Naive thymus-derived CD8-positive, alpha-beta T cell (primary cell): ENCODE measurements at regions of chr2 and their contacts with region 1.

Region 1: DNA sequence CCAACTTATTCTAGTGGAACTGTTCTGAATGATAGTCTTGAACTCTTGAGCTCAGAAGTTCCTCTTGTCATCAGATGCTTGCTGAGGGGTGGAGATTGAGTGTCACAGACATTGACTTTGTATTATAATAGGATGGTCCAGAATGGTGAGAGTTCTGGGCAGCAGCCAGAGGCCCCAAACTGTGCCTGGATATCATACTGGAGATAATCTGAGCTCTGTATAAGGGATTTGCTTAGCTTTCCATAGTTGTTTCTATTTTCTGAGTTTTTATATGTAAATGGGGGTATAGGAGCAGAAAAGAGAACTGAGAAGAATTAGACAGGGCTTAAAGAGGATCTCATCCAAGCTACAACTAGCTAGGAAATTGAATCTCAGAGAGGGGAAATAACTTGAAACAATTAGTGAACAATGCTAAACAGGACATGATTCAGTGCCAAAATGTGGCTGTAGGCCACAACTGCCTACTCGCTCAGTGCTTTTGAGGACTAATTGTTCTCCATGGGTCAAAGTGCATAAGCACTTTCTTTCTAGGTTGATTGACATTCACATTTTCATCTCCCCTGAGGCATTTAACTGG is 10.1 kb upstream of the LCLAT1 start:
- DNase-seq: no peak
- ATAC-seq: no peak
- H3K4me3 Mint-ChIP-seq: no peak overlapping the region
- H3K27ac Mint-ChIP-seq: peak overlapping the region in 4 of 10 donors; percentile 10 to 55 (median 46)
- H3K4me1 Mint-ChIP-seq: peaks cover 20 to 41% (median 30%) of the 10 kb centered on the region in 4 donors
- H3K27me3 Mint-ChIP-seq: no peaks in the 10 kb centered on the region

Region 2: DNA sequence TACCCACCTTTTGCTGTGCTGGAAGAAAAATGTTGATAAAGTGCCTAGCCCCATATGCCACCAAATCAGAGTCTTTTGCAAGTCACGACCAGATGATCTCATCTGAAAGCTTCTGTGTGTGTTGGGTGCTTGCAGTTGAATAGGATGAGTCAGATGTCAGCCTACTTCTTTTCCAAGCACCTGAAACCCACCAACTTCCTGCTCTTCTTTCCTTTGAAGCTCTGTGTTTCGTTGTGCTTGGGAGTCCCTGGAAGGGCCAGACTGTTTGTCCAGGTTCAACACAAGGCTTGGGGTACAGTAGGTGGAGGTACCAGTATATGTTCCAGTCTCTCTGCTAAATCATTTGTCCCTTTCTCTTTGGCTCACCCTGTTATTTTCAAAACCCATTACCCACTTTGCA is 26.7 kb before region 1 on chr2:
- POLR2A ChIA-PET with region 1: no interaction called
- DNase-seq: peak in 1 of 10 donors; percentile 2
- ATAC-seq: peak in 1 of 2 donors; percentile 33
- H3K4me3 Mint-ChIP-seq: no peak overlapping the region
- H3K27ac Mint-ChIP-seq: peak overlapping the region; percentile 16 to 88 (median 57)
- H3K4me1 Mint-ChIP-seq: peaks cover 29 to 44% (median 39%) of the 10 kb centered on the region in 4 donors
- H3K27me3 Mint-ChIP-seq: no peaks in the 10 kb centered on the region

Region 3: GRCh38 chr2:30421604-30422443 is 15.1 kb before region 1 on chr2:
- POLR2A ChIA-PET with region 1: interaction called, 23 read pairs
- DNase-seq: peak in 7 of 10 donors; percentile 22 to 76 (median 60)
- ATAC-seq: peak; percentile 66 to 70
- H3K4me3 Mint-ChIP-seq: peak overlapping the region; percentile 59 to 82 (median 70)
- H3K27ac Mint-ChIP-seq: peak overlapping the region; percentile 88 to 98 (median 93)
- H3K4me1 Mint-ChIP-seq: peaks cover 19 to 53% (median 50%) of the 10 kb centered on the region in 4 donors
- H3K27me3 Mint-ChIP-seq: no peaks in the 10 kb centered on the region